ENCODE measurements at regions of chr2 and their contacts with region 1.

Region 1: GRCh38 chr2:68925295-68925896 is 27.3 kb downstream of the GKN2 start:
- DNase-seq: no peak
- ATAC-seq: peak; percentile 80
- H3K4me3 ChIP-seq: no peak overlapping the region
- H3K27ac ChIP-seq: no peak overlapping the region
- H3K4me1 ChIP-seq: no peaks in the 10 kb centered on the region
- H3K27me3 ChIP-seq: no peaks in the 10 kb centered on the region

Region 2: DNA sequence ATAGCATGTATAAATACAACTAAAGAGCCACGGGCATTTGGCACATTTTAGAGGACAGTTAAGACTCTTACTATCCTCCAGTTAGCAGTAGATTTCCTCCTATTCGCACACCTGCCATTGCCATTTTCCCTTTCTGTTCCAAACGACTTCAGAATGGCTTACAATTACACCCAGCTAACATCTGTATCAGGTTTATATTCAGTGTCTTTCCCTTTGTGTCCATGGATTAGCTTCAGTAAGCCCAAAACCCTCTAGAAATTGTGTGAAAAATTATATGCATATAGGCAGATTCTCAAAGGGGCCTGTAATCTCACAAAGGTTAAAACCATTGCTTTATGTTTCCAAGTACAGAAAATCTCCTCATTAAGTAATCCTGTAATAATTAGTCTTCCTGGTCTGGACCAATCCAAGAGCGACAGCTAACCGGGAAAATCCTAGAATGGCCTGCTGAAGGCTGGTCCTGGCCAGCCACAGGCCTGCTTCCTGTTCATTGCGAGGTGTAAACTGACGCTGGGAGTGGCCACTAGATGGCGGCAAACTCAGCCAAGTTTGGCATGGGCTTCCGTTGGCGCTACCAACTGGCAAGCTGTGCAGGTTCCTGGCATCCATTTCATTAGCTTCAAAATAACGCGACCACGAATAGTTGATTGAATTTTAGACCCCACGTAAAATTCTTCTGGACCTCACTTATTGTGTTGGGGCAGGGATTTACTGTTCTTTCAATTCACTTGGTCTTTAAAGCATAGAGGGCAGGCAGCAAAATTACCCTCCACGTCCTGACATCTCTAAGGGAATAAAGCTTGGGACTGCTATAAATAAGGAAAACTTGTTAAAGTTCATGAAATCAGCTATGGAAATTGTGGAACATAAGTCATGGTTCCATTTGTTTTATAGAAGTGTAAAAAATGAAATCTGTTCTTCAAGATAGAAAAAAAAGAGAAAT is 173.7 kb before region 1 on chr2:
- intact Hi-C with region 1: loop called in 1 of 2 experiments (anchors 5 kb)
- DNase-seq: peak; percentile 95 to 97
- ATAC-seq: peak; percentile 93
- H3K4me3 ChIP-seq: no peak overlapping the region
- H3K27ac ChIP-seq: no peak overlapping the region
- H3K4me1 ChIP-seq: no peaks in the 10 kb centered on the region
- H3K27me3 ChIP-seq: no peaks in the 10 kb centered on the region

Region 3: DNA sequence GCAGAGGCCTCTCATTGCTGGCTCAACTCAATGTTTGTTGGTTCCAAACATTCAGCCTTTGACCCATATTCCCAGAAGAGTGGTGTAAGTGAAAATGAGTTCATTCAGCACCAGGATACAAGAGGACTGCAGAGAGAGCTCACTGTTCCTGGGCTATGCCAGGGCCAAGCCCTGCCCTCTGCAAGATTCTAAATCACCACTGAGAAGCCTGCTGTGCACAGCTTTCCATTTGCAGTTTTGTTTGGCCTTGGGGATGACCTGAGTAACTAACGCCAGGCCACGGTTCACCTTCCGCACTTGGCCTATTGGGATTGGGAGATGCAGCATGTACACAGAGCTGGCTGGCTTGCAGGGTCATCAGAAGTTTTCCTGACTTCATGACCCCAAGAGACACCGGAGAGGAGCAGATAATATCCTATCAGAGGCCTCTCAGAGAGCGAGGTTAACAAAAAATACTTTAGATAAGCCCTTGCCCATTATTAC is 61.7 kb after region 1 on chr2:
- intact Hi-C with region 1: no loop called
- DNase-seq: no peak
- ATAC-seq: no peak
- H3K4me3 ChIP-seq: no peak overlapping the region
- H3K27ac ChIP-seq: no peak overlapping the region
- H3K4me1 ChIP-seq: no peaks in the 10 kb centered on the region
- H3K27me3 ChIP-seq: no peaks in the 10 kb centered on the region

Measured in aorta (tissue), 5 donors.